ENCODE measurements at regions of chr2 and their contacts with region 1.

Region 1: DNA sequence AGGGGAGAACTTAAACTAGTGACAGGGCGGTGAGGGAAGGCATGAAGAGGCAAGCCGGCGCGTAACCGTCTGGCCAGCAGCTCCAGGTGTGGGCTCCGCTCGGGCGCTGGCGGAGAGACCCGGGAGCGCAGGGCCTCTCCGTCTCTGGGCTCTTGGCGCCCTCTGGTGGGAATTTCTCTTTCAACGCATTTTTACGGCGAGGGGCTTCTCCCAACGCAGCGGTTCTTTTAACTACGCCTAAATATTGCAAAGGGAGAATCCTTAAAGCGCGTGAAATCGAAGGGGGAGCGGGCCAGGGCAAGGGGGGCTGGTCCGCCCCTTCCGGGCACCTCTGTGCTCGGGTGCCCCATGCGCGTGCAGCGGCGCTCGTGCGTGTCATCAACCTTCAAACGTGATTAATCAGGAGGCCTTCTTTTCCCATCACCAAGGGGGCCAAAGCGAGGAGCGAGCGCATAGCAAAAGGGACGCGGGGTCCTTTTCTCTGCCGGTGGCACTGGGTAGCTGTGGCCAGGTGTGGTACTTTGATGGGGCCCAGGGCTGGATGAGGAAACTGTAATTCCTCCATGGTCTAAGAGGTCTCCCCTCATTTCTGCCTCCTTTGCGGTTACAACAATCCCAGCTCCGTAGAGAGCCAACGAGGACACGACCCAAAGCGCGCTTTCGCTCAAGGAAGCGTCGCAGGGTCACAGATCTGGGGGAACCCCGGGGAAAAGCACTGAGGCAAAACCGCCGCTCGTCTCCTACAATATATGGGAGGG is 762 bp upstream of the GAD1 start:
- ATAC-seq: peak; percentile 13 to 65 (median 60)
- H3K4me3 ChIP-seq: peak overlapping the region; percentile 33 to 62 (median 47)
- H3K27ac ChIP-seq: peak overlapping the region in 1 of 2 donors; percentile 9
- H3K4me1 ChIP-seq: peaks cover 8 to 12% of the 10 kb centered on the region in 2 donors

Region 2: DNA sequence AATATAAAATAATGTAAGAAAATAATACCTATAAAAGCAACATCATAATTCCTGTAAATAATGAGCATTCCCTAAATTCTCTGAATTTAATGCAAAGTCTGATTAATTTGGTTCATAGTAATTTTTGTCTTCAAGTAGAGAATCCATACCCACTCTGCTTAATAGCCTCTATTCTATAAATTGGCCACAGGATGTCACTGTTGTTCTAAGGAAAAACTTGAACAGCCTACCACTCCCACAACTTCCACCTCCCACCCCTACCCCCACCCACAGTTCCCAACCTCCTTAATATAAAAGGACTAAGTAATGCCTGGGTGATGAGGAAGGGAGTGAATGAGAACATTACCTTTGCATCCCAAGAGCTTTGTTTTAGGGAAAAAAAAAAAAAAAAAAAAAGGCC is 1363.8 kb before region 1 on chr2:
- in situ Hi-C with region 1: loop called in 1 of 9 experiments (anchors 25 kb)
- ATAC-seq: peak in 4 of 8 experiments; percentile 48 to 81 (median 74)
- H3K4me3 ChIP-seq: no peak overlapping the region
- H3K27ac ChIP-seq: no peak overlapping the region
- H3K4me1 ChIP-seq: peaks cover 0 to 8% of the 10 kb centered on the region in 2 donors

Region 3: GRCh38 chr2:169862816-169863215 is 953.1 kb before region 1 on chr2:
- in situ Hi-C with region 1: no loop called
- ATAC-seq: peak in 1 of 8 experiments; percentile 26
- H3K4me3 ChIP-seq: no peak overlapping the region
- H3K27ac ChIP-seq: no peak overlapping the region
- H3K4me1 ChIP-seq: no peaks in the 10 kb centered on the region

Region 4: DNA sequence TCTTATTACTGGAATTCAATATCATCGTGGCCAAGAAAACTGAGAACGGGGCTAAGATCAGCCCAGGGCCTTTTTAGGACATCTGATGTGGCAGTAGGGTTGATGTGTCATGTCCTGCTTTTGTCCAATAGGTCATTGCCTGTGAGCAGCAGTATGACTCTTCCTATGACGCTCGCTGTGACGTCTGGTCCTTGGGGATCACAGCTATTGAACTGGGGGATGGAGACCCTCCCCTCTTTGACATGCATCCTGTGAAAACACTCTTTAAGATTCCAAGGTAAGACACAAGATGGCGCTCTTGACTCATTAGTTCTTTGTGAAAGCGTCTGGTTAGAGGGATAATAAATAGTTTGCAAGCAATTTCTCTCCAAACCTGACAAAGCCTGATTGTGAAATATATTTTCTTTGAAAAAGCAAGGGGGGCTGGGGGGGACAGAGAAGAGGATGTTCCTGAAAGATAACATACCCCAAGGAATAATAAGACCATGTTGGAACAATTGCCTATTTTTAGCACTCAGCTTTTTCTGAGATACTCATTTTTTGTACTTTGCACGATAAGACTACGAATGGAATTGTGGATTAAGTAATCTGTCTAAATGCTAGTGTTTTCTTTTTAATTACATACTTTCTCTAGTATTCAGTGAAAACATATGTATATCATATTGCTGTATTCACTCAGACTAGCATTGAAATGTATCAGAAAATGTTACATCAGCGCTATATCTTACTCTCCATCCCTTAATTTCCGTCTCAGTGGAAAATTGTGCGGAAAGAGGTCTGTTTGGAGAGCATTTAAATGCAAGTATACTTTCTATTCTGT is 579.9 kb before region 1 on chr2:
- in situ Hi-C with region 1: loop called (anchors 10 to 25 kb)
- ATAC-seq: peak; percentile 70 to 98 (median 95)
- H3K4me3 ChIP-seq: no peak overlapping the region
- H3K27ac ChIP-seq: no peak overlapping the region
- H3K4me1 ChIP-seq: peaks cover 13 to 29% of the 10 kb centered on the region in 2 donors

Region 5: DNA sequence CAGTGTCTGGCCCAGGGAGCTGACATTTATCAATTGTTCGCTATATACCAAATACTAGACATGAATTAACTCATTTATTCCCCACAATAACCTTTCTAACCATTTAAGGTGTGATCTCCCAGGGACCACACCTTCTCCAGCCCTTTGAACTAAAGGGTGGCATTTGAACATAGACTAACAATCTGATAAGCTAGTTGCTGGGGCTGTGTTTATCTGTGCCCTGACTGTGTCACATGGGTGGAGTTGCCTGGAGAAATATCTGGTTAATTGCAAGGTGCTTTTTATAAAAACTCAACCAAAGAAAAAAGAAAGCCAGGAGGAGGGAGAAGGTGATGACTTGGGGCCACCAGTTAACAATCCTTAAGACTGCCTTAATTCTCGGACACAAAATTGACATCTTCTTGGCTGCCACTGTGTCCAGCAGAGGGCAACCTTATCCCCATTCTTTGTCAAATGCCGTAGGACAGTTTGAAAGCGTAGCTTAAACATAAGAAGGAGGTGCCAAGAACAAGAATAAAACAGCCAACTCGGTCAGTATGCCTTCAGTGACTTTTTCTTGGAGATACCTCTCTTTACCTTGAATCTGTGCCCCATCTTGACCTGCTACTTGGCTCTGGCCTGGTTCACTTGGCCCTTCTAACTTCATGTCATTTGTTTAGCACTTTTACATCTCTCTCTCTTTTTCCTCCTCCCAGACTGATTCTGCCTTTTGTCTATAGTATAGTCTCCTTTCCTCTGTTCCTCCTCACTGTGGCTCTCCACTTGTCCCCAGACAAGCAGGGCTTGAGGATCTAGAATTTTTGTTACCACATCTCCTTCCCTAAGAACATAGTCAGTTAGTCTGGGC is 454.6 kb before region 1 on chr2:
- in situ Hi-C with region 1: loop called in 2 of 9 experiments (anchors 10 to 25 kb)
- ATAC-seq: peak in 5 of 8 experiments; percentile 38 to 90 (median 68)
- H3K4me3 ChIP-seq: no peak overlapping the region
- H3K27ac ChIP-seq: no peak overlapping the region
- H3K4me1 ChIP-seq: peaks cover 0 to 16% of the 10 kb centered on the region in 2 donors

Region 6: GRCh38 chr2:170369894-170370293 is 446.0 kb before region 1 on chr2:
- in situ Hi-C with region 1: loop called in 6 of 9 experiments (anchors 10 to 25 kb)
- ATAC-seq: peak in 1 of 8 experiments; percentile 29
- H3K4me3 ChIP-seq: no peak overlapping the region
- H3K27ac ChIP-seq: no peak overlapping the region
- H3K4me1 ChIP-seq: no peaks in the 10 kb centered on the region

Region 7: DNA sequence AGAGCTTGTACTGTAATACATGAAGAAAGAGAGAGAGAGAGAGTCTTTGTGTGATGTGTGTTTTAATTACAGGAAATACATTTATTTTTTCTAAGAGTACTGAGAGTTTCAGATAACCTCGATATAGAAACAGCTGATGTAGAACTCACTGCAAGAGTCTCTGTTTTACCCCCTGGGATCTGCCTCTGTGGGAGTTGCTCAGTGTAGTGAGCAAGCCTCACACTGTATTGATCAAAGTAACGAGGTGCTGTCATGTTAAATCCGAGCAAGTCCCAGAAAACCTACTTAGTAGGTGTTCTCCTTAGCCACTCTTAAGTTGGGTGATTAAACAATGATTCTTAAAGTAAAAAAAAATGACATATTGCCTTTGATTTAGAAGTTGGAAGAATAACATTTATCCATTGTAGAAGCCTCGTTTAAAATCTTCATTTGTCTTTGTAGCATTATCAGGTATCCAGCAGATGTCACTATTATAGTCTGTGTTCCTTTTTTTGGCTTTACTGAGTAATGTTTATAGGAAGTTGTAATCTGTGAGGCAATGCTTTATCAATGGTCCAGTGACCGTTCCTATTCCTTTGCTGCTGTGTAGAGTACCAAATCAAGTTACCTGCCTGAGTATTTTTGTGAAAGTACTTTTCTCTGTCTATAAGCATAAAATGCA is 419.0 kb before region 1 on chr2:
- in situ Hi-C with region 1: loop called in 3 of 9 experiments (anchors 25 kb)
- ATAC-seq: peak in 2 of 8 experiments; percentile 26 to 38
- H3K4me3 ChIP-seq: no peak overlapping the region
- H3K27ac ChIP-seq: no peak overlapping the region
- H3K4me1 ChIP-seq: peaks cover 0 to 4% of the 10 kb centered on the region in 2 donors

Region 8: GRCh38 chr2:170409164-170409535 is 406.8 kb before region 1 on chr2:
- in situ Hi-C with region 1: loop called in 1 of 9 experiments (anchors 25 kb)
- ATAC-seq: peak in 7 of 8 experiments; percentile 43 to 69 (median 59)
- H3K4me3 ChIP-seq: peak overlapping the region in 2 of 5 donors; percentile 7 to 17
- H3K27ac ChIP-seq: no peak overlapping the region
- H3K4me1 ChIP-seq: no peaks in the 10 kb centered on the region

Region 9: DNA sequence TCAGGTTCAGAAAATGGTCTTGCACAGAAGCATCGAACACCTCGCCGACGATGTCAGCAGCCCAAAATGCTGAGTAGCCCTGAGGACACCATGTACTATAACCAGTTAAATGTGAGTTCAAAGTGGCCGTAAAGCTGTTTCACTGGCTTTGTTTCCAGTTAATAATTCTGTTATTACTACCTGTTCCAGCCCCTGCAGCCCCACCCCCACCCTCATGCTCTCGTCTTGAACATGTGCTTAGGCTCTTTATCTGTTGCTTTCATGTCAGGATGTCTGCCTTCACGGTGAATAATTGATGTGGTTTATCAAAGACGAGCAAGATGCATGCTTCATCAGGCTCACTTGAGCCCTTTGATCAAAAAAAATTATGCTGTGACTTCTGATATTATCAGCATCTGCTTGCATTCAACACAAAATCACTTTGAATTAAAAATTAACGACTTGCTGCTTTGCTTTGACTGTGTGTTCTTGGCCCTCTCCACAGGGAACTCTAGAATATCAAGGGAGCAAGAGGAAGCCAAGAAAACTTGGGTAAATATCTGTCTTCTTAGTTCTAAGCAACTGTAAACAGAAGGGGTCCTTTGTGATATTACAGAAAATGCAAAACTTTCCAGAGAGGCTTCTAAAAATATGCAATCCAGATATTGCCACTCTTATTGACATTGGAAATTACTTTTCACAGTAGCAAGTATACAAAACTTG is 164.2 kb before region 1 on chr2:
- in situ Hi-C with region 1: no loop called
- ATAC-seq: no peak
- H3K4me3 ChIP-seq: no peak overlapping the region
- H3K27ac ChIP-seq: no peak overlapping the region
- H3K4me1 ChIP-seq: no peaks in the 10 kb centered on the region

Region 10: GRCh38 chr2:171655586-171655985 is 839.7 kb after region 1 on chr2:
- in situ Hi-C with region 1: no loop called
- ATAC-seq: no peak
- H3K4me3 ChIP-seq: no peak overlapping the region
- H3K27ac ChIP-seq: no peak overlapping the region
- H3K4me1 ChIP-seq: no peaks in the 10 kb centered on the region